ENCODE measurements at regions of chr3 and their contacts with region 1.

Region 1: DNA sequence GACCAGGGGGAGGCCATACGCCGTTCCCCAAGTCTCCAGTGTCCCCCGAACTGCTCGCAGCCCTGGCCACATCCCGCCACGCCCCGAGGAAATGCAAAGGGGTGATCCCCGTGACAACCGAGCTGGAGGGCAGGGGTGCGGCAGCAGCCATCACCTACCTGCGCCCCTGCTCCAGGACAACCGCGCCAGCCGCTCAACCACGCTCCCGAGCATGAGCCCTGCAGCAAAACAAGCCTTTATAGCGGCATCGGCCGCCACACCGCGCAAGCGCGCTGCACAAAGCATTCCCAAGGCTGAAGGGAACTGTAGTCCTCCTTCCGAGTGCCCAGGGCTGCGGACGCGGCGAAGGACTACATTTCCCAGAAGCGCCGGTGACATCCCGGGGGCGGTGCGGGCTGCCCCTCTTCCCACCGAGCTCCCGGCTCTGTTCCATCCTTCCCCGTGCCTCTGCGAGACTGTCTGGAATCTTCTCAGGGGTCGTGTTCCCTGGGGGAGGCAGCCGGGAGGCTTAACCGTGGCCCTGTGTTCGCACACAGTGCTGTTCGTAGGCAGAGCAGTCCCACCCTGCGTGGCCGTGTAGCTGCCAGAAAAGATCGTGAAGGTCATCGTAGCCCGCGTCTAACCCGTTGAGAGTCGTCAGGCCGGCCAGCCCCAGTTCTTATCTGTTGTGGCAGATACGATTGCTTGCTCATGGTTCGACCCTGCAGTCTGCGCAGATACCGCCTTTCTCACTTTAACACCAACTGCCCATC is at the start of gene ABCC5:
- DNase-seq: peak; percentile 89
- ATAC-seq: peak; percentile 96
- H3K4me3 ChIP-seq: peak within 1 kb of the TSS; percentile 73 to 99 (median 93)
- H3K4me3 Mint-ChIP-seq: peak within 1 kb of the TSS; percentile 100
- H3K27ac ChIP-seq: peak within 1 kb of the TSS in 1 of 2 donors; percentile 10
- H3K27ac Mint-ChIP-seq: peak within 1 kb of the TSS; percentile 94
- H3K4me1 ChIP-seq: peaks cover 10 to 13% of the 10 kb centered on the region in 2 donors
- H3K4me1 Mint-ChIP-seq: peaks cover 20% of the 10 kb centered on the region
- H3K27me3 ChIP-seq: no peaks in the 10 kb centered on the region
- H3K27me3 Mint-ChIP-seq: peaks cover 15% of the 10 kb centered on the region
- CTCF ChIP-seq: peak; percentile 81
- total RNA-seq, gene ABCC5: 29.5 and 31.7 TPM in 2 replicates

Region 2: DNA sequence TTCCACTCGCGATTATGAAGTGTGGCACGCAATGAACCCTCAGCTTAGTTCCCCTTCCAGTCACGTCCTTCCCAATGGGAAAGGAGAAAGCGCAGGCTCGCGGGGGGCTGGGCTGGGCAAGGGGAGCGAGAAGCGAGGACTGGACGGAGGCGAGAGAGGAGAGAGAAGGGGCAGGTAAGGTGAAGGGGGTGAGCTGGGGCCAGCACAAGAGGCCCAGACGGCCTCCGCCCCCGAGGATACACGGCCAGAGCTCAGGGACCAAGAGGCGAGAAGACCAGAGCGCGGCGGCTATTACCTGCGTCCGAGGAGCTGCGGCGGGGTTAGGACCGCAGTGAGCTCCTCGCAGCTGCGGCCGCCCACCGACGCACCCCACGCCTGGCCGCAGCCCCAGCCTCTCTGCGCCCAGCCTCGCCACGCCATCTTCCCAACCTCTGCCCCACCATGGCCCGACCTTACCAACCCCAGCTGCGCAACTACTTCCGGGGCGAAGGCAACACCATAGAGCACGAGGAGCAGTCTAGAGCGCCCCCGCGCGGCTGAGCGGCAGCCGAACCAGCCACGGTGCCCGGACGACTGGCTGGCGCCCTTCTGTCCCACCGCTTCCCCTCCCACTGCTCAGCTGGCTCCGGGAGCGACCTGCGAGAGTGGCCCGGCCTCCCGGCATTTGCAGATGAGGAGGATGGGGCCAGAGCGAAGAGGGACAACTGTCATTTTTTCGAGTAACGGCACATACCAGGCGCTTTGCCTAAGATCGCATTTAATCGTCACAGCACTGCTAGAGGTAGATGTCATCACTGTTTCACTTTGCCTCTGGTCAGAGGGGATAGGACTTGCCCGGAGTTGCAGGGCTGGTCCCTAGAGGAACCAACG is 133.2 kb before region 1 on chr3 and contains the start of gene PARL:
- CTCF ChIA-PET with region 1: interaction called, 13 read pairs
- POLR2A ChIA-PET with region 1: no interaction called
- intact Hi-C with region 1: loop called (anchors 1 kb)
- DNase-seq: peak; percentile 95
- ATAC-seq: peak; percentile 100
- H3K4me3 ChIP-seq: peak within 1 kb of the TSS; percentile 68 to 96 (median 84)
- H3K4me3 Mint-ChIP-seq: peak within 1 kb of the TSS; percentile 92
- H3K27ac ChIP-seq: peak within 1 kb of the TSS; percentile 39 to 75
- H3K27ac Mint-ChIP-seq: peak within 1 kb of the TSS; percentile 94
- H3K4me1 ChIP-seq: peaks cover 11 to 19% of the 10 kb centered on the region in 2 donors
- H3K4me1 Mint-ChIP-seq: peaks cover 36% of the 10 kb centered on the region
- H3K27me3 ChIP-seq: peaks cover 0 to 6% (median 0%) of the 10 kb centered on the region in 4 experiments
- H3K27me3 Mint-ChIP-seq: peaks cover 3% of the 10 kb centered on the region
- CTCF ChIP-seq: peak; percentile 90
- total RNA-seq, gene PARL: 46.7 and 51.2 TPM in 2 replicates

Region 3: GRCh38 chr3:183895296-183895695 is 122.6 kb before region 1 on chr3:
- CTCF ChIA-PET with region 1: interaction called, 84 read pairs
- POLR2A ChIA-PET with region 1: interaction called, 3 read pairs
- intact Hi-C with region 1: loop called (anchors 1 kb)
- DNase-seq: peak; percentile 73
- ATAC-seq: peak; percentile 96
- H3K4me3 ChIP-seq: no peak overlapping the region
- H3K4me3 Mint-ChIP-seq: no peak overlapping the region
- H3K27ac ChIP-seq: no peak overlapping the region
- H3K27ac Mint-ChIP-seq: no peak overlapping the region
- H3K4me1 ChIP-seq: peaks cover 0 to 2% of the 10 kb centered on the region in 2 donors
- H3K4me1 Mint-ChIP-seq: no peaks in the 10 kb centered on the region
- H3K27me3 ChIP-seq: peaks cover 0 to 9% (median 0%) of the 10 kb centered on the region in 4 experiments
- H3K27me3 Mint-ChIP-seq: peaks cover 37% of the 10 kb centered on the region
- CTCF ChIP-seq: peak; percentile 86

Region 4: GRCh38 chr3:183904833-183905780 is 112.7 kb before region 1 on chr3:
- CTCF ChIA-PET with region 1: interaction called, 7 read pairs
- POLR2A ChIA-PET with region 1: no interaction called
- intact Hi-C with region 1: loop called (anchors 2 kb)
- DNase-seq: no peak
- ATAC-seq: no peak
- H3K4me3 ChIP-seq: no peak overlapping the region
- H3K4me3 Mint-ChIP-seq: no peak overlapping the region
- H3K27ac ChIP-seq: no peak overlapping the region
- H3K27ac Mint-ChIP-seq: no peak overlapping the region
- H3K4me1 ChIP-seq: no peaks in the 10 kb centered on the region
- H3K4me1 Mint-ChIP-seq: no peaks in the 10 kb centered on the region
- H3K27me3 ChIP-seq: peaks cover 0 to 2% (median 0%) of the 10 kb centered on the region in 4 experiments
- H3K27me3 Mint-ChIP-seq: peaks cover 17% of the 10 kb centered on the region
- CTCF ChIP-seq: no peak

Region 5: GRCh38 chr3:183980403-183980802 is 37.4 kb before region 1 on chr3:
- CTCF ChIA-PET with region 1: no interaction called
- POLR2A ChIA-PET with region 1: no interaction called
- intact Hi-C with region 1: no loop called
- DNase-seq: no peak
- ATAC-seq: no peak
- H3K4me3 ChIP-seq: no peak overlapping the region
- H3K4me3 Mint-ChIP-seq: no peak overlapping the region
- H3K27ac ChIP-seq: no peak overlapping the region
- H3K27ac Mint-ChIP-seq: no peak overlapping the region
- H3K4me1 ChIP-seq: no peaks in the 10 kb centered on the region
- H3K4me1 Mint-ChIP-seq: no peaks in the 10 kb centered on the region
- H3K27me3 ChIP-seq: no peaks in the 10 kb centered on the region
- H3K27me3 Mint-ChIP-seq: no peaks in the 10 kb centered on the region
- CTCF ChIP-seq: no peak

Region 6: DNA sequence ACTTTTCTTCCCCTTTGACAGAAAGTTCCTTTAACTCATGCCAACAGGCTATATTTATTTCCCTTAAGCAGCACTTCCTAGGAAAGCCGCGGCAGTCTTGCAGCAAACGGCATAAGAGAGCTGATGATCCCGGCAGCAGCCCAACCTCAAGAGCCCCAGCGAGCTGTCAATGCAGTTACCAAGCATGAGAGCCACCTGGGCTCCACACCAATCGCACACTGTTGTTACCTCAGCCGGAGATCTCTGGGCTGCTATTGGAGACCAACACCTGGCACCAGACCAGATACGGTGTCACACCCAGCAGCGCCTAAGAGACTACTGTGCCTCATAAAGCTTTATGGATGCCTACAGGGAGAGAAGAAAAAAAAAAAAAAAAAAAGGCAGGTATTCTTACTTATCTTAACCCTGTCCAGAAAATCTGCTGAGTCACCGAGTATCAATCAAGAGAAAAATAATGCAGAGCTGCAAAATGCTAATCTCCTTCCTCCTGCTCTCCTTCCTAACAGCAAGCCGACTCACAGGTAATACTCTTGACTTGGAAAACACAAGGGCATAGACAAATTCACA is 11.8 kb before region 1 on chr3:
- CTCF ChIA-PET with region 1: interaction called, 66 read pairs
- POLR2A ChIA-PET with region 1: no interaction called
- intact Hi-C with region 1: no loop called
- DNase-seq: peak; percentile 63
- ATAC-seq: peak; percentile 84
- H3K4me3 ChIP-seq: peak overlapping the region in 1 of 5 experiments; percentile 11
- H3K4me3 Mint-ChIP-seq: peak overlapping the region; percentile 71
- H3K27ac ChIP-seq: peak overlapping the region in 1 of 2 donors; percentile 47
- H3K27ac Mint-ChIP-seq: peak overlapping the region; percentile 66
- H3K4me1 ChIP-seq: peaks cover 29 to 30% of the 10 kb centered on the region in 2 donors
- H3K4me1 Mint-ChIP-seq: peaks cover 31% of the 10 kb centered on the region
- H3K27me3 ChIP-seq: no peaks in the 10 kb centered on the region
- H3K27me3 Mint-ChIP-seq: no peaks in the 10 kb centered on the region
- CTCF ChIP-seq: no peak

Region 7: GRCh38 chr3:184185461-184186308 is 167.8 kb after region 1 on chr3 and contains the start of gene ABCF3:
- CTCF ChIA-PET with region 1: no interaction called
- POLR2A ChIA-PET with region 1: no interaction called
- intact Hi-C with region 1: loop called (anchors 1 kb)
- DNase-seq: peak; percentile 100
- ATAC-seq: peak; percentile 94
- H3K4me3 ChIP-seq: peak within 1 kb of the TSS; percentile 70 to 100 (median 97)
- H3K4me3 Mint-ChIP-seq: peak within 1 kb of the TSS; percentile 99
- H3K27ac ChIP-seq: peak within 1 kb of the TSS; percentile 48 to 68
- H3K27ac Mint-ChIP-seq: peak within 1 kb of the TSS; percentile 94
- H3K4me1 ChIP-seq: peaks cover 17 to 21% of the 10 kb centered on the region in 2 donors
- H3K4me1 Mint-ChIP-seq: peaks cover 33% of the 10 kb centered on the region
- H3K27me3 ChIP-seq: no peaks in the 10 kb centered on the region
- H3K27me3 Mint-ChIP-seq: no peaks in the 10 kb centered on the region
- CTCF ChIP-seq: no peak
- total RNA-seq, gene ABCF3: 115 and 131 TPM in 2 replicates

Region 8: GRCh38 chr3:184811999-184812661 is 794.3 kb after region 1 on chr3 and contains the start of gene VPS8:
- CTCF ChIA-PET with region 1: no interaction called
- POLR2A ChIA-PET with region 1: no interaction called
- intact Hi-C with region 1: loop called (anchors 2 kb)
- DNase-seq: peak; percentile 98
- ATAC-seq: peak; percentile 94
- H3K4me3 ChIP-seq: peak within 1 kb of the TSS; percentile 77 to 95 (median 92)
- H3K4me3 Mint-ChIP-seq: peak within 1 kb of the TSS; percentile 93
- H3K27ac ChIP-seq: peak within 1 kb of the TSS; percentile 70 to 76
- H3K27ac Mint-ChIP-seq: peak within 1 kb of the TSS; percentile 96
- H3K4me1 ChIP-seq: peaks cover 16 to 18% of the 10 kb centered on the region in 2 donors
- H3K4me1 Mint-ChIP-seq: peaks cover 28% of the 10 kb centered on the region
- H3K27me3 ChIP-seq: no peaks in the 10 kb centered on the region
- H3K27me3 Mint-ChIP-seq: peaks cover 3% of the 10 kb centered on the region
- CTCF ChIP-seq: peak; percentile 46
- total RNA-seq, gene VPS8: 95.6 and 106 TPM in 2 replicates

Measured in B cell (primary cell).